H1 (cell line): ENCODE measurements at regions of chr3 and their contacts with region 1.

Region 1: DNA sequence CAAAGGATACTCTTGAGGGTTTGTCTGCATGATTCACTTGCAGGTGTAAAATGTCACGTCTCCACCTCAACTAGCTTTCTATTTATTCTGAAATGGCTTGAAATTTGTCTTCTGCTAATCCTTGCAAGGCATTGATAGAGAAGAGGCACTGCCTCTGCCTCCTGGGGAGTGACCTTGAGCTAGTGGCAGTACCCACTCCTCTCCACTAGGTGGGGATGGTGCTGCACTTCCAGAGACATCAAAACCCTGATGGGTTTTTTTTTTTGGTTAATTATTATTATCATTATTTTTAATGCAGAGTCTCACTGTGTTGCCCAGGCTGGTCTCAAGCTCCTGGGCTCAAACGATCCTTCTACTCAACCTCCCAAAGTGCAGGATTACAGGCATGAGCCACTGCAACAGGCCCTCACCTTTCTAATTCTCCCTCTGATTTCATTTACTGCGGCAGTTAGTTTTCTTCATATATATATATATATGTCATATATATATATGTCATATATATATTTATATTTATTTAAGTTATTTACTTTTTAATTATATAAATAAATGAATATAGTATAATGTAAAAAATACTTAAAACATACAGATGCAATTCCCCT is 117.6 kb upstream of the EIF1B start:
- DNase-seq: peak in 1 of 2 experiments; percentile 86
- H3K4me3 ChIP-seq: no peak overlapping the region
- H3K27ac ChIP-seq: no peak overlapping the region
- H3K4me1 ChIP-seq: peaks cover 0 to 7% (median 6%) of the 10 kb centered on the region in 4 experiments; a peak in 4 of 7 replicates
- H3K27me3 ChIP-seq: no peaks in the 10 kb centered on the region
- CTCF ChIP-seq: peak; percentile 81 to 85 (median 83)
- EP300 ChIP-seq: no peak
- POLR2A ChIP-seq: no peak
- RAD21 ChIP-seq: peak; percentile 88 to 90

Region 2: DNA sequence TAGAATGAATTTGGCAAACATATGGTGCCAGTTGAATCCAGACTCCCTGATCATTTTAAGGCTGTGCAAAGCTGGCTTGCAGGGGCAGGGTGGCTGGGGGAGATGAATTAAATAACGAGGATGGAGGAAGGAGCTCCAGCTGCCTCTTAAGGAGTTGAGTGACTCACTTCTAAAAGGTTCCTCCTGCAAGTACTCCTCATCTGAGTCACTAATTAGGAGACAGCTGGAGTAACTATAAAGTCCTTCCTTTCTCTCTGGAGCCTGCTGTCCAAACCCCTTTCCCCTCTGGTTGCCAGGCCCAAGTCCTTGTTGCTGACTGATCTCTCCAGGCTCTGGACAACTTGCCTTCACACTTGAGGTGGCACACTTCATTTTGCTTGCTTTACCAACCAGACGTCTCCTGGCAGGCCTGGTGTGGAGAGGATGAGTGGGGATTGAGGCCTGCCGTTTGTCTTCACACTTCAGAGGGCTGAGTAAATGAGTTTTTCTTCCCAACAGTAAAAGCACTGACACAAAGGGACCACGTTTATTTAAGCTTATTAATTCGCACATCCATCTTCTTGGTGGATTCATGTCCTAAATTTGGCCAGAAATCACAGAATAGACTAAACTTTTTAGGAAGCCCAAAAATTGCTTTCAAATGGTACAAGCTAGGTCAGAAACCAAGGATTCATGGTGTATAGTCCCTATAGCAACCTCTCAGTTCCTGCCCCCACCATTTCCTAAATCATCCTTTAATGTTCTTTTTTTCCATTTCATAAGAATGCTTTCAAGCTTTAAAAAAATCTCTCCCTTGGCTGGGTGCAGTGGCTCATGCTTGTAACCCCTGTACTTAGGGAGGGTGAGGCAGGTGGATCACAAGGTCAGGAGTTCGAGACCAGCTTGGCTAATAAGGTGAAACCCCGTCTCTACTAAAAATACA is 473.0 kb before region 1 on chr3:
- CTCF ChIA-PET with region 1: no interaction called
- POLR2A ChIA-PET with region 1: no interaction called
- DNase-seq: no peak
- H3K4me3 ChIP-seq: no peak overlapping the region
- H3K27ac ChIP-seq: no peak overlapping the region
- H3K4me1 ChIP-seq: no peaks in the 10 kb centered on the region
- H3K27me3 ChIP-seq: no peaks in the 10 kb centered on the region
- CTCF ChIP-seq: no peak
- EP300 ChIP-seq: no peak
- POLR2A ChIP-seq: no peak
- RAD21 ChIP-seq: no peak

Region 3: GRCh38 chr3:39981547-39982184 is 210.3 kb before region 1 on chr3:
- CTCF ChIA-PET with region 1: no interaction called
- POLR2A ChIA-PET with region 1: no interaction called
- DNase-seq: no peak
- H3K4me3 ChIP-seq: no peak overlapping the region
- H3K27ac ChIP-seq: no peak overlapping the region
- H3K4me1 ChIP-seq: 0 out of 7 replicates have a peak, but pooled peaks cover 0 to 2% (median 0%) of the 10 kb centered on the region in 4 experiments
- H3K27me3 ChIP-seq: no peaks in the 10 kb centered on the region
- CTCF ChIP-seq: no peak
- EP300 ChIP-seq: no peak
- POLR2A ChIP-seq: no peak
- RAD21 ChIP-seq: no peak

Region 4: DNA sequence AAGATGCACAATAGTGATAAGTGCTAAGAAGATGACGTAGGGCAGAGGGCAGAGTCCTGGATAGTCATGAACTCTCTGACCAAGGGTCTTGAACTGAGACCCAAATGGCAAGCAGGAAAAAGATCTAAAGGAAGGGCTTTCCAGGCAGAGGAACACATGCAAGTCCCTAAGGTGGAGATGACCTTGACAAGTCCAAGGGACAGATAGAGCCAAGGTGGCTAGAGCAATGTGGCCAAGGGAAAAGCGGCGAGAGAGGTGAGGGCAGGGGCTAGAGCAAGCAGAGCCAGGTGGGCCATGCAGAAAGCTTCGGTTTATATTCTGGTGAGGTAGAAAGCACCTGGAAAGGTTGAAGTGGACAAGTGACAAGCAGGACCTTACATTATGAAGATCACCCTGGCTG is 31.9 kb after region 1 on chr3:
- CTCF ChIA-PET with region 1: interaction called, 10 read pairs
- POLR2A ChIA-PET with region 1: no interaction called
- DNase-seq: no peak
- H3K4me3 ChIP-seq: no peak overlapping the region
- H3K27ac ChIP-seq: no peak overlapping the region
- H3K4me1 ChIP-seq: peaks cover 0 to 3% (median 0%) of the 10 kb centered on the region in 4 experiments; a peak in 1 of 7 replicates
- H3K27me3 ChIP-seq: no peaks in the 10 kb centered on the region
- CTCF ChIP-seq: no peak
- EP300 ChIP-seq: no peak
- POLR2A ChIP-seq: no peak
- RAD21 ChIP-seq: no peak

Region 5: GRCh38 chr3:40237889-40238571 is 46.1 kb after region 1 on chr3:
- CTCF ChIA-PET with region 1: interaction called, 23 read pairs
- POLR2A ChIA-PET with region 1: no interaction called
- DNase-seq: peak in 1 of 2 experiments; percentile 23
- H3K4me3 ChIP-seq: no peak overlapping the region
- H3K27ac ChIP-seq: no peak overlapping the region
- H3K4me1 ChIP-seq: no peaks in the 10 kb centered on the region
- H3K27me3 ChIP-seq: no peaks in the 10 kb centered on the region
- CTCF ChIP-seq: peak; percentile 16 to 59 (median 32); a peak in 3 of 4 replicates
- EP300 ChIP-seq: no peak
- POLR2A ChIP-seq: no peak
- RAD21 ChIP-seq: peak; percentile 15 to 30; a peak in 3 of 4 replicates

Region 6: DNA sequence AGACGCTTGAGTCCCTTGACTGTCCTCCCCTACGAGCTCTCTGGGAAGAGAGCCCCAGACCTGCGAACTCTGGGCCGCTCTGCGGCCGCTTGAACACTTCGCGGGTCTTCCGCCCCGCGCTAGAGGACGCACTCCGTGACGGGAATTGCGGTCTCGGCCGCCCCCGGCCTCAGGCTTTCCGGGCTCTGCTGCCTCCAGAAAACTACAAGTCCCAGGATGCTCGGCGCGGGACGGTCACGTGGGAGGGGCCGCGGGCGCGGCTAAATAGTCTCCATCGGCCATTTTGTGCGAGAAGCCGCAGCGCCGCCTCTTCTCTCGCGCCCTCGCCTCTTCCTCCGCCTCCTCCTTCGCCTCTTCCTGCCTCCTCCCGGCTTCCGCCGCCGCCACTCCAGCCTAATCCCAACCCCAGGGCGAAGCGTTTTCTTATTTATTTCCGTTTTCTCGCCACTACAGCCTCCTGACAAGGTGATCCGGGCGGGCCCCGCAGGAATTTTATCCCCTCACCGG is 117.5 kb after region 1 on chr3 and contains the start of gene EIF1B:
- CTCF ChIA-PET with region 1: interaction called, 290 read pairs
- POLR2A ChIA-PET with region 1: interaction called, 16 read pairs
- DNase-seq: peak; percentile 97 to 98
- H3K4me3 ChIP-seq: peak within 1 kb of the TSS; percentile 93 to 98 (median 96)
- H3K27ac ChIP-seq: peak within 1 kb of the TSS; percentile 94
- H3K4me1 ChIP-seq: peaks cover 3 to 5% (median 4%) of the 10 kb centered on the region in 4 experiments; a peak in 4 of 7 replicates
- H3K27me3 ChIP-seq: no peaks in the 10 kb centered on the region
- CTCF ChIP-seq: peak; percentile 69 to 95 (median 84)
- EP300 ChIP-seq: 0 out of 3 replicates have a peak, but pooled peaks of 1 of the 2 experiments have one; percentile 41
- POLR2A ChIP-seq: peak; percentile 74 to 97
- RAD21 ChIP-seq: peak; percentile 40 to 54
- total RNA-seq, gene EIF1B: 111 and 115 TPM in 2 replicates

Region 7: DNA sequence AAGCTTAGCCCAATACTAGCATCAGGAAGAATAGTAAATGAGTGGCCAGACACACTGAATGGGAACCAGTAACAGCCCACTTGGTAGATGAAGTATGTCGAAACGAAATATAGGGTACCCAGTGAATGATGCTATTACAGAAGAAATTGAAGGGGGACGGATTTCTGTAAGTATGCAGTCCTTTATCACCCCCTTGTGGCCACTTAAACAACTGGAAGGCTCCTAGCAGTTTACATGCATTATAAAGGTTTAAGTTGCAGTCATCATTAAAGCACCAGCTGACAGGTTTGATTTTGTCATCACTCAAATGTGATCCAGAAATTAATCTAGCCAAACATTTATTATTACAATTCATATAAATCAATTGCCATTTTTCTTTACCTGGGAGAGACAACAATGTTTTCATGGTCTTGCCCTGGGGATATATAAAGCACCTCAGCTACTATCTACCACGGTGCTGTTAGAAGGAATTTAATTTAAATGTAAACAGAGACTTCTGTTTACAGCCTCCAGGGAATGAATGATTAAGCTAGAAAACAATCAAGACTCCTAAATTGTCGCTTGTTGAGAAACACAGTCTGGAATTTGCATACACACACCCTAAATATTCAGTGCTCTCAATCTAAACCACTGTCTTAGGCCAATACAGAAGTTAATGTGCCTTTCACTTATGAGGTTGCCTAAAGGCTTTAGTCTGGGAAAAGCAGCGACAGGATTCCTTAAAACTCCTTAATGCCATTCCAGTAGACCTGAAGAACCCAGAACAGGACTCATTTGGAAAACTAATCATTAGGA is 125.3 kb after region 1 on chr3:
- CTCF ChIA-PET with region 1: interaction called, 290 read pairs
- POLR2A ChIA-PET with region 1: interaction called, 16 read pairs
- DNase-seq: no peak
- H3K4me3 ChIP-seq: no peak overlapping the region
- H3K27ac ChIP-seq: no peak overlapping the region
- H3K4me1 ChIP-seq: no peaks in the 10 kb centered on the region
- H3K27me3 ChIP-seq: no peaks in the 10 kb centered on the region
- CTCF ChIP-seq: peak in 2 of 3 experiments; percentile 71 to 77; a peak in 3 of 4 replicates
- EP300 ChIP-seq: no peak
- POLR2A ChIP-seq: no peak
- RAD21 ChIP-seq: peak; percentile 89 to 90